ENCODE measurements at regions of chr2 and their contacts with region 1.

Region 1: DNA sequence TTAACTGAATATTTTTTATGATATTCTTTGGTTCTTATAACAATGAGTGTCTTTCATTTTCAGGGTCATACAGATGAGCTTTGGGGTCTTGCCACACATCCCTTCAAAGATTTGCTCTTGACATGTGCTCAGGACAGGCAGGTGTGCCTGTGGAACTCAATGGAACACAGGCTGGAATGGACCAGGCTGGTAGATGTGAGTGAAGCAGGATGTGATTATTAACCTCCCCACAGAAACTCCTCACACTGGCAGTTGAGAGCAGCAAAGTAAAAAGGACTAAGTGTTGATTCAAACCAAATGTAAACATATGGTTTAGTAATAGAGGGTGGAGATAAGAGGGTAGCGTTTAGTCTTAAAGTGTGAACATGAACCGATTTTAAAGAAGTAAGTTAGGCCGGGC is 57.8 kb downstream of the COX7A2L start:
- DNase-seq: no peak
- H3K4me3 ChIP-seq: no peak overlapping the region
- H3K4me3 Mint-ChIP-seq: no peak overlapping the region
- H3K27ac Mint-ChIP-seq: no peak overlapping the region
- H3K4me1 ChIP-seq: no peaks in the 10 kb centered on the region
- H3K4me1 Mint-ChIP-seq: no peaks in the 10 kb centered on the region
- H3K27me3 ChIP-seq: no peaks in the 10 kb centered on the region
- H3K27me3 Mint-ChIP-seq: no peaks in the 10 kb centered on the region
- CTCF ChIP-seq: no peak

Region 2: GRCh38 chr2:42293019-42293418 is 10.2 kb before region 1 on chr2:
- CTCF ChIA-PET with region 1: no interaction called
- POLR2A ChIA-PET with region 1: no interaction called
- intact Hi-C with region 1: loop called (anchors 1 kb)
- DNase-seq: no peak
- H3K4me3 ChIP-seq: no peak overlapping the region
- H3K4me3 Mint-ChIP-seq: no peak overlapping the region
- H3K27ac Mint-ChIP-seq: no peak overlapping the region
- H3K4me1 ChIP-seq: no peaks in the 10 kb centered on the region
- H3K4me1 Mint-ChIP-seq: no peaks in the 10 kb centered on the region
- H3K27me3 ChIP-seq: no peaks in the 10 kb centered on the region
- H3K27me3 Mint-ChIP-seq: no peaks in the 10 kb centered on the region
- CTCF ChIP-seq: no peak